SK-N-SH (cell line): ENCODE measurements at regions of chr15 and their contacts with region 1.

Region 1: GRCh38 chr15:50003786-50004334 is 115.2 kb downstream of the ATP8B4 start:
- DNase-seq: peak; percentile 68
- H3K4me3 ChIP-seq: no peak overlapping the region
- H3K27ac ChIP-seq: no peak overlapping the region; a peak in 1 of 4 replicates
- H3K4me1 ChIP-seq: no peaks in the 10 kb centered on the region; a peak in 1 of 4 replicates
- H3K27me3 ChIP-seq: no peaks in the 10 kb centered on the region
- CTCF ChIP-seq: peak; percentile 71
- EP300 ChIP-seq: no peak
- RAD21 ChIP-seq: peak; percentile 93

Region 2: DNA sequence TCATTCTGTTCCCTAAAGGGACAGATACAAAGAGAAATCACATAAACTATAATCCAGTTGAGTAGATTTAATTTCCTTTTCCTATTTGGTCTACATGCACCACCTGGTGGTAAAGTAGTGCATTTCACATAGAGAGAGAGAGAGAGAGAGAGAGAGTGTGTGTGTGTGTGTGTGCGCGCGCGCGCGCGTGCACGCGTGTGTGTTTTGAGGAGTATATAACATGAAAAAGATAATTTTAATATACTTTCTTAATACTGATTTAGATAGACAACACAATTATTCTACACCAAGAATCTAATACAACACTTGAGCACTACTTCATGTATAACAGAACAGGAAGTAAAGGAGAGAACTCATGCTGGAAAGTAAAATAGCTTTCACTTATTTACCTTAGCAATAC is 581.9 kb before region 1 on chr15:
- CTCF ChIA-PET with region 1: interaction called, 13 read pairs
- POLR2A ChIA-PET with region 1: no interaction called
- DNase-seq: peak; percentile 23
- H3K4me3 ChIP-seq: no peak overlapping the region
- H3K27ac ChIP-seq: no peak overlapping the region
- H3K4me1 ChIP-seq: peaks cover 3 to 4% of the 10 kb centered on the region in 2 experiments; a peak in 2 of 4 replicates
- H3K27me3 ChIP-seq: no peaks in the 10 kb centered on the region
- CTCF ChIP-seq: peak; percentile 92
- EP300 ChIP-seq: no peak
- RAD21 ChIP-seq: peak; percentile 71

Region 3: DNA sequence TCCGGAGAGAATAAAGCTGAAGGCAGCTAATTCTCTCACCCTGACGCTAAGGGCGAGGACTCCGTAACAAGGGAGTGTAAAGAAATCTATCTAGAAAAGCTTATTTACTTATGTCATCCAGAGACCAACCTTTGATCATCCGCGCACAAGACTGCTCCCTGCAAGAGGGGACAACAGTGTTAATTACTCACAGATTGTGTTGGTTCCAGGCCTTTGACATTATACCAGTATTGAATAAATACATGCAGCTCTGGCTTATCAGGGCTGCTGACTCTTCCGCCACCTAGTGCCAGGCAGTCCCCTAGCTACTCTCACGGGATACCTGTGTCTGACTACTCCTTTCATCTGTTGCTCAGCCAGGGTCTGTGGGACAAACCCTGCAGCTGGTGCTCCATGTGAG is 171.3 kb before region 1 on chr15:
- CTCF ChIA-PET with region 1: interaction called, 10 read pairs
- POLR2A ChIA-PET with region 1: no interaction called
- DNase-seq: peak; percentile 5
- H3K4me3 ChIP-seq: no peak overlapping the region
- H3K27ac ChIP-seq: no peak overlapping the region
- H3K4me1 ChIP-seq: no peaks in the 10 kb centered on the region; a peak in 1 of 4 replicates
- H3K27me3 ChIP-seq: no peaks in the 10 kb centered on the region
- CTCF ChIP-seq: no peak; the same call in 1 of the 2 replicates
- EP300 ChIP-seq: no peak
- RAD21 ChIP-seq: peak; percentile 68

Region 4: DNA sequence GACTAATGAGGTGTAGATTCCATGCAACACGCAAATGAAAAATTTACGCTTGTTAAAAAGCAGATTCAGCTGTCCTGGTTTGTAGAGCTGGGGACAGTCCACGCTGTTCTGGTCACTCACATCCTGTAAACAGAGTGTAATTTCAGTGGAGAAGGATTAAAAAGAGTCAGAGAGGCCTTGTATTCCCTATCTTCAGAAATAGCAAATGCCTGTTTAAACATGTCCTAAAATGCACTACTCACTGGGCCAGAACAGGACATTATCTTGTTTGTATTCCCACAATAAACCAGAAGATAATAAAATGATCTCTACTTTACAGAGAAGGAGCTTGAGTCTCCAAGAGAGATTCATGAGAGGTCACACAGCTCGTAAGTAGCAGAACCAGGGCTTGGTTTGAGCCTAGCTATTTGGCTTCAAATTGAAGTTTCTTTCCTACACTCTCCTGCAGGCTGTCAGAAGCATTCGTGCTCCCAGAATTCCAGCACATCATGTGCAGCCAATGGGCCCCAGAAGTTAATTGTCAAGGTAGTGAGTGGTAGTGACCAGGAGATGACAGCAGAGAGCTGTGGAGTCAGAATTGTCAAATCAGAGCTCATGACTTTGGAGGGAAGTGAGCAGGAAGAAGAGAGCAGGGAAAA is 127.3 kb before region 1 on chr15:
- CTCF ChIA-PET with region 1: interaction called, 11 read pairs
- POLR2A ChIA-PET with region 1: no interaction called
- DNase-seq: no peak
- H3K4me3 ChIP-seq: no peak overlapping the region
- H3K27ac ChIP-seq: no peak overlapping the region
- H3K4me1 ChIP-seq: no peaks in the 10 kb centered on the region
- H3K27me3 ChIP-seq: no peaks in the 10 kb centered on the region
- CTCF ChIP-seq: no peak
- EP300 ChIP-seq: no peak
- RAD21 ChIP-seq: no peak

Region 5: GRCh38 chr15:49989498-49989897 is 14.4 kb before region 1 on chr15:
- CTCF ChIA-PET with region 1: interaction called, 13 read pairs
- POLR2A ChIA-PET with region 1: no interaction called
- DNase-seq: no peak
- H3K4me3 ChIP-seq: no peak overlapping the region
- H3K27ac ChIP-seq: no peak overlapping the region
- H3K4me1 ChIP-seq: no peaks in the 10 kb centered on the region; a peak in 1 of 4 replicates
- H3K27me3 ChIP-seq: no peaks in the 10 kb centered on the region
- CTCF ChIP-seq: no peak
- EP300 ChIP-seq: no peak
- RAD21 ChIP-seq: no peak

Region 6: DNA sequence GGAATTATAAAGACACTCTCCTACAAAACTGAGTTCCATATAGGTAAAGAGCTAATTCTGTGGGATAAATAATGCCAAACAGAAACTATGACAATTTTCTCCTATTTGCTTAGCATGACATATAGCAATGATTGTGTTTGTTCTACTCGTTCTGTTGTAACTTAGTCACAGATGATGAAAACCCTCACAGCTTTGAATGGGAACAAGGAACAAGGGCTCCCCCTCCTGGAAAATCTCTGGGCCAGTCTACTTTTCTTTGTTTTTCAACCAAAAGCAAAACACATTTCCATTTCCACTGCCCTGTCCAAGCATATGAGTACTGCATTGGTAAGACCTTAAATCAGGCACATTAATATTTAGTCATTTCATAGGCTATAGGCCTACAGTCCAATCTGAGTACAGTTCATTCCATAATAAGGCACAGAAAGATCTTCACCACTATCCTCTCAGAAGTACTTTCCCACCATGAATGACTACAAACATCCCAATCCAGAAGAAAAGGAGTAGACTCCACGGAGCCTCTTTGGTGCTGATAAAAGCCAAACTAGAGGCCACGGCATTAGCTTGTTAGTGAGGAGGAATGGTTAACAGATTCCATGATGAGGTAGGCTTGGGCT is 48.1 kb after region 1 on chr15:
- CTCF ChIA-PET with region 1: interaction called, 29 read pairs
- POLR2A ChIA-PET with region 1: no interaction called
- DNase-seq: peak; percentile 52
- H3K4me3 ChIP-seq: no peak overlapping the region; a peak in 1 of 4 replicates
- H3K27ac ChIP-seq: no peak overlapping the region
- H3K4me1 ChIP-seq: peaks cover 0 to 2% of the 10 kb centered on the region in 2 experiments; a peak in 1 of 4 replicates
- H3K27me3 ChIP-seq: no peaks in the 10 kb centered on the region
- CTCF ChIP-seq: peak; percentile 71
- EP300 ChIP-seq: no peak
- RAD21 ChIP-seq: peak; percentile 93

Region 7: GRCh38 chr15:50145451-50145872 is 141.6 kb after region 1 on chr15:
- CTCF ChIA-PET with region 1: interaction called, 11 read pairs
- POLR2A ChIA-PET with region 1: no interaction called
- DNase-seq: peak; percentile 67
- H3K4me3 ChIP-seq: no peak overlapping the region; a peak in 1 of 4 replicates
- H3K27ac ChIP-seq: no peak overlapping the region
- H3K4me1 ChIP-seq: no peaks in the 10 kb centered on the region; a peak in 1 of 4 replicates
- H3K27me3 ChIP-seq: no peaks in the 10 kb centered on the region
- CTCF ChIP-seq: peak; percentile 70
- EP300 ChIP-seq: no peak
- RAD21 ChIP-seq: peak; percentile 84

Region 8: DNA sequence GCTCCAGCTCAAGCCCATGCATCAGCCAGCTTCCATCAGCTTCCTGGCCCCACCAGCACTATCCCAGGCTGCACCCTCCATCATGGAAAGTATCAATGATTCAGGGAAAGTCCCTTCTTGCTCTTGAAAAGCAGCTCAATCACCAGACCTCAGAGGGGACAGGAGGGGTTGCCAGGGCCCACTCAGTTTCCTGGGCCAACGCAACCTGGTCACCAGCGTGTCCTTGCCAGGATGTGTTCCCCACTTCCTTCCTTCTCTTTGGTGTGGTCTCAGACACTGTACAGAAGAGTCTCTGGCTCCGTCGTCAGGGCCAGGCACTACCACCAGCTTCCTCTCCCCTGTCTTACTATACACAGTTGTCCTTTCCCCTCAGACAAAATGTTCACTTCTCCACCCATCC is 258.7 kb after region 1 on chr15:
- CTCF ChIA-PET with region 1: no interaction called
- POLR2A ChIA-PET with region 1: no interaction called
- DNase-seq: no peak
- H3K4me3 ChIP-seq: no peak overlapping the region
- H3K27ac ChIP-seq: no peak overlapping the region
- H3K4me1 ChIP-seq: no peaks in the 10 kb centered on the region
- H3K27me3 ChIP-seq: no peaks in the 10 kb centered on the region
- CTCF ChIP-seq: no peak
- EP300 ChIP-seq: no peak
- RAD21 ChIP-seq: no peak